ENCODE measurements at regions of chr2 and their contacts with region 1.

Region 1: GRCh38 chr2:138298120-138298814 is 203.3 kb upstream of the SPOPL start:
- DNase-seq: no peak
- H3K4me3 ChIP-seq: no peak overlapping the region
- H3K27ac ChIP-seq: no peak overlapping the region
- H3K4me1 ChIP-seq: peaks cover 11% of the 10 kb centered on the region
- H3K27me3 ChIP-seq: no peaks in the 10 kb centered on the region
- CTCF ChIP-seq: no peak

Region 2: DNA sequence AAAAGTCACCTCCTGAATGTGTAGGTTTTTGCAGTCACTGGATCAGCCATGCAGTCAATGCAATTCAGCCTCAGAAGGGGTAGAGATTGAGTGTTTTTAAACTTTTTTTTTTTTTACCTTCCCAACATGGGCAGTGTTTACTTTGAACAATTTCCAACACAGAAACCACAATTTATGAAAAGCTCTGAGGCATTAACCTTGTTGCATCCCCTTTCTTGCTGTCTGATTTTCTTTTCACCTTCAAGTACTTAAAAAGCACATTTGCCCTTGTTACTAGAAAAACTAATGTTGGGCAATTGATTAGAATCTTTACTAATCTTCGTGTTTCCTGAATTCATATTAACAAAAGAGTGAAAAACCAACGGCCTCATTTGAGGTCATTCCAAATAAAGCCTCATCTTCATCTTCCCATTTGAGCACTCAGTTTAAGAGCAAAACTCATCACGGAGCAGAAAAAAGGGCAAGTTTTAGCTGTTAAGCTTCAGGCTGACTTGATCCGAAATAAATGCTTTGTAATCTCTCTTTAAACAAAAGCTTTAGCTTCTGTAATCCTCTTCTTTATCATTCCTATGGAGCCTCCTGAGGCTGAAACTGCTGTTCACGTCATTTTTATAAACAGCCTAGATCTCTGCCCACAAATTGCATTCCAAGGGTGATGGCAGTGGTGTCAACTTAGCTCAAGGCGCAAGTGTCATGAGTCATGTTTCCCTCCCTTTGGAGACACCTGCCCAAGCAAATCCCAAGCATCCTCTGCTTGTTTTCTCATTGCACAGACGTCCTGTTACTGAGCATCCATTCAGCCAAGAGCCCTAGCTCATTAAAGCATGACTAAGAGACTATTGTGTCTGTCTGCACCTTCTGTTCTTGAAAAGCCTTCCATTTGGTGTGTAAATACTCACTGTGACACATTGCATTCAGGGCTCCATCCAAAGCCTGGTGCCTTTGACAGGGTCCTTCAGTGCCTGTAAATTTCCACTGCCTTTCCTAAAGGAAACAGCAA is 226.2 kb before region 1 on chr2:
- CTCF ChIA-PET with region 1: no interaction called
- POLR2A ChIA-PET with region 1: no interaction called
- intact Hi-C with region 1: no loop called
- DNase-seq: no peak
- H3K4me3 ChIP-seq: no peak overlapping the region
- H3K27ac ChIP-seq: no peak overlapping the region
- H3K4me1 ChIP-seq: no peaks in the 10 kb centered on the region
- H3K27me3 ChIP-seq: no peaks in the 10 kb centered on the region
- CTCF ChIP-seq: no peak

Region 3: GRCh38 chr2:138104071-138104470 is 194.2 kb before region 1 on chr2:
- CTCF ChIA-PET with region 1: interaction called, 18 read pairs
- POLR2A ChIA-PET with region 1: no interaction called
- intact Hi-C with region 1: no loop called
- DNase-seq: no peak
- H3K4me3 ChIP-seq: no peak overlapping the region
- H3K27ac ChIP-seq: no peak overlapping the region
- H3K4me1 ChIP-seq: no peaks in the 10 kb centered on the region
- H3K27me3 ChIP-seq: no peaks in the 10 kb centered on the region
- CTCF ChIP-seq: no peak